Heart right ventricle (tissue), 16 donors: ENCODE measurements at regions of chr10 and their contacts with region 1.

Region 1: GRCh38 chr10:75137533-75138438 is 26.3 kb downstream of the SAMD8 start:
- DNase-seq: no peak
- ATAC-seq: peak in 7 of 8 donors; percentile 38 to 94 (median 72)
- H3K4me3 ChIP-seq: no peak overlapping the region
- H3K27ac ChIP-seq: peak overlapping the region in 4 of 10 donors; percentile 8 to 15 (median 10)
- H3K4me1 ChIP-seq: peaks cover 0 to 34% (median 25%) of the 10 kb centered on the region in 9 donors
- H3K27me3 ChIP-seq: no peaks in the 10 kb centered on the region
- CTCF ChIP-seq: no peak

Region 2: GRCh38 chr10:75091146-75091545 is 46.6 kb before region 1 on chr10:
- intact Hi-C with region 1: no loop called
- DNase-seq: no peak
- ATAC-seq: no peak
- H3K4me3 ChIP-seq: no peak overlapping the region
- H3K27ac ChIP-seq: no peak overlapping the region
- H3K4me1 ChIP-seq: no peaks in the 10 kb centered on the region
- H3K27me3 ChIP-seq: no peaks in the 10 kb centered on the region
- CTCF ChIP-seq: no peak

Region 3: DNA sequence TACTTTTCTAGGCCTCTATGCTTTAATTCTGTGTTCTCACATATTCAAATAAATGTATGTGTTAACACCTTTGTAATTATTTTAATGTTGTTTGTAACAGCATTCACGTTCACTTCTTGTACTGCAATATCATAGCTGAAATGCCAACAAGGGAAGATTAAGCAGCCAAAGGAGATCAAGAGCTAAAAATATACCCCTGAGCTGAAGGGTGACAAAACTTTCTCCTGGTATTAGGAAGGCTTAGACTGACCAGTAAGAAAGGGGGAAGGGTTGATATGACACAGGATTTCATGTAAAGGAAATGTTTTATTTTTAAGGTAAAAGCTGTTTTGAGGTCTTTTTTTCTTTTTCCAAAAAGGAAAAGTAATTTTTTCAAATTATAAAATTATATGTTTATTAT is 32.4 kb after region 1 on chr10:
- intact Hi-C with region 1: loop called in 1 of 10 experiments (anchors 5 kb)
- DNase-seq: no peak
- ATAC-seq: peak; percentile 34 to 88 (median 78)
- H3K4me3 ChIP-seq: no peak overlapping the region
- H3K27ac ChIP-seq: peak overlapping the region in 9 of 10 donors; percentile 33 to 75 (median 64)
- H3K4me1 ChIP-seq: peaks cover 0 to 35% (median 14%) of the 10 kb centered on the region in 9 donors
- H3K27me3 ChIP-seq: no peaks in the 10 kb centered on the region
- CTCF ChIP-seq: no peak